ENCODE measurements at regions of chr3 and their contacts with region 1.

Region 1: GRCh38 chr3:49093853-49094767 is at the start of gene QRICH1:
- DNase-seq: peak; percentile 98
- ATAC-seq: peak; percentile 89 to 95 (median 94)
- H3K4me3 ChIP-seq: peak within 1 kb of the TSS; percentile 63 to 100 (median 94)
- H3K27ac ChIP-seq: peak within 1 kb of the TSS; percentile 86 to 99 (median 94)
- H3K4me1 ChIP-seq: peaks cover 0 to 62% (median 41%) of the 10 kb centered on the region in 12 donors
- H3K27me3 ChIP-seq: no peaks in the 10 kb centered on the region
- CTCF ChIP-seq: peak in 11 of 12 donors; percentile 14 to 74 (median 52)
- POLR2A ChIP-seq: peak in 1 of 2 donors; percentile 47
- total RNA-seq, gene QRICH1: 44.6 to 91.6 (median 55.5) TPM

Region 2: DNA sequence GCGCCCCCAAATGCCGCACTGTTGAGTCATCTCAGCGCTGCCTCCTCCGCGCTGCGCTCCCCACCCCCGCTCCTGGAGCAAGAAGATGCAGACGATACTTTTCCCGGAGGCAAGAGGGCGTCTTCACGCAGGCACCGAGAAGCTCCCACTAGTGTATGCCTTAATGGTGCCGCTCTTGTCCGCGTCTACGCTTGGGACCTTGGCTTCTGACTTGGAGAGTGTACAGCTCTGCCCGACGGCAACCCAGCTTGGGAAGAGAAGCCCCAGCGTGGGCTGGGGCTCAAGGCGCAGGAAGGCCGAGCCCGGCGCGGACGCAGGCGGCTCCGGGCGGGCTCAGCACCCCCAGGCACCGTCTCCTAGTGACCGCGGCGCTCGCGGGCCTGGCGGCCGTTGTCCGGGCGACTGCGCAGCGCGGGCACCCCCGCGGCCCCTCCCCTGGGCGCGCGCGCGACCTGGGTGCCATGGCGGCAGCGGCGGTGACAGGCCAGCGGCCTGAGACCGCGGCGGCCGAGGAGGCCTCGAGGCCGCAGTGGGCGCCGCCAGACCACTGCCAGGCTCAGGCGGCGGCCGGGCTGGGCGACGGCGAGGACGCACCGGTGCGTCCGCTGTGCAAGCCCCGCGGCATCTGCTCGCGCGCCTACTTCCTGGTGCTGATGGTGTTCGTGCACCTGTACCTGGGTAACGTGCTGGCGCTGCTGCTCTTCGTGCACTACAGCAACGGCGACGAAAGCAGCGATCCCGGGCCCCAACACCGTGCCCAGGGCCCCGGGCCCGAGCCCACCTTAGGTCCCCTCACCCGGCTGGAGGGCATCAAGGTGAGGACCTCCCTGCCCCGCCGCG is 104.1 kb before region 1 on chr3 and contains the start of gene P4HTM:
- intact Hi-C with region 1: loop called in 2 of 10 experiments (anchors 2 to 10 kb)
- DNase-seq: peak; percentile 87 to 92 (median 91)
- ATAC-seq: peak; percentile 67 to 91 (median 88)
- H3K4me3 ChIP-seq: peak within 1 kb of the TSS; percentile 63 to 95 (median 87)
- H3K27ac ChIP-seq: peak within 1 kb of the TSS; percentile 68 to 98 (median 90)
- H3K4me1 ChIP-seq: peaks cover 0 to 36% (median 22%) of the 10 kb centered on the region in 12 donors
- H3K27me3 ChIP-seq: no peaks in the 10 kb centered on the region
- CTCF ChIP-seq: peak in 9 of 12 donors; percentile 22 to 61 (median 40)
- POLR2A ChIP-seq: peak in 1 of 2 donors; percentile 51
- total RNA-seq, gene P4HTM: 22.1 to 42.7 (median 34.0) TPM

Region 3: GRCh38 chr3:49021813-49022687 is 72.1 kb before region 1 on chr3 and contains the start of gene NDUFAF3:
- intact Hi-C with region 1: loop called in 2 of 10 experiments (anchors 5 to 10 kb)
- DNase-seq: peak; percentile 93 to 97 (median 94)
- ATAC-seq: peak; percentile 64 to 87 (median 84)
- H3K4me3 ChIP-seq: peak within 1 kb of the TSS; percentile 76 to 100 (median 92)
- H3K27ac ChIP-seq: peak within 1 kb of the TSS; percentile 99 to 100 (median 100)
- H3K4me1 ChIP-seq: peaks cover 0 to 75% (median 41%) of the 10 kb centered on the region in 12 donors
- H3K27me3 ChIP-seq: no peaks in the 10 kb centered on the region
- CTCF ChIP-seq: peak; percentile 89 to 100 (median 98)
- POLR2A ChIP-seq: peak; percentile 20 to 35
- total RNA-seq, gene NDUFAF3: 140 to 308 (median 160) TPM

Region 4: GRCh38 chr3:49028673-49029562 is 65.2 kb before region 1 on chr3 and contains the start of gene IMPDH2:
- intact Hi-C with region 1: loop called in 2 of 10 experiments (anchors 5 to 10 kb)
- DNase-seq: peak; percentile 90 to 97 (median 94)
- ATAC-seq: peak; percentile 94 to 97 (median 94)
- H3K4me3 ChIP-seq: peak within 1 kb of the TSS; percentile 53 to 85 (median 68)
- H3K27ac ChIP-seq: peak within 1 kb of the TSS; percentile 30 to 98 (median 91)
- H3K4me1 ChIP-seq: peaks cover 3 to 53% (median 17%) of the 10 kb centered on the region in 12 donors
- H3K27me3 ChIP-seq: no peaks in the 10 kb centered on the region
- CTCF ChIP-seq: peak in 4 of 12 donors; percentile 28 to 50 (median 38)
- POLR2A ChIP-seq: peak; percentile 93 to 99
- total RNA-seq, gene IMPDH2: 43.9 to 87.8 (median 55.4) TPM

Region 5: GRCh38 chr3:49104483-49105291 is 10.6 kb after region 1 on chr3 and contains the start of gene QARS1:
- intact Hi-C with region 1: loop called in 1 of 10 experiments (anchors 1 kb)
- DNase-seq: peak; percentile 96 to 97 (median 97)
- ATAC-seq: peak; percentile 97 to 99 (median 98)
- H3K4me3 ChIP-seq: peak within 1 kb of the TSS; percentile 68 to 99 (median 88)
- H3K27ac ChIP-seq: peak within 1 kb of the TSS; percentile 63 to 96 (median 88)
- H3K4me1 ChIP-seq: peaks cover 13 to 25% (median 18%) of the 10 kb centered on the region in 12 donors
- H3K27me3 ChIP-seq: no peaks in the 10 kb centered on the region
- CTCF ChIP-seq: no peak
- POLR2A ChIP-seq: peak; percentile 33 to 79
- total RNA-seq, gene QARS1: 145 to 221 (median 194) TPM

Region 6: DNA sequence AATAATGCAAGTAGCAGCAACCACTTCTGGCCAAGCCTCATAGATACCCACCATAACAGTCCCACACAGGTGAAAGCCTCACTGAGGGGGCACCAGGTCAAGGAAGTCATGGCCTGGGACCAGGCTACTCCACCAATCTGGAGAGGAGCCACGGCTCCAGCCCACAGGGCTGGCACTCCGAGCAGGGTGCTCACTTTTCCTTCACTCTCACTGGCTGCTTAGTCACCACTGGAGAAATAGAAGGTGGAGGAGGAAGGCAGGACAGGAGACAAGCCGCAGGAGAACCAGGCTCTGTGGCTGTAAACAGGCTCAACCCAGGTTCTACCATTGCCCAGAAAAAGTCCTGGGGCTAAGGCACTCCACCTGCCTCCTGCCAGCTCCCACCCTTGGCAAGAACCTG is 25.3 kb after region 1 on chr3:
- intact Hi-C with region 1: no loop called
- DNase-seq: no peak
- ATAC-seq: no peak
- H3K4me3 ChIP-seq: peak overlapping the region in 11 of 12 donors; percentile 64 to 99 (median 91)
- H3K27ac ChIP-seq: peak overlapping the region; percentile 90 to 100 (median 97)
- H3K4me1 ChIP-seq: peaks cover 3 to 32% (median 19%) of the 10 kb centered on the region in 12 donors
- H3K27me3 ChIP-seq: no peaks in the 10 kb centered on the region
- CTCF ChIP-seq: no peak
- POLR2A ChIP-seq: no peak

Region 7: DNA sequence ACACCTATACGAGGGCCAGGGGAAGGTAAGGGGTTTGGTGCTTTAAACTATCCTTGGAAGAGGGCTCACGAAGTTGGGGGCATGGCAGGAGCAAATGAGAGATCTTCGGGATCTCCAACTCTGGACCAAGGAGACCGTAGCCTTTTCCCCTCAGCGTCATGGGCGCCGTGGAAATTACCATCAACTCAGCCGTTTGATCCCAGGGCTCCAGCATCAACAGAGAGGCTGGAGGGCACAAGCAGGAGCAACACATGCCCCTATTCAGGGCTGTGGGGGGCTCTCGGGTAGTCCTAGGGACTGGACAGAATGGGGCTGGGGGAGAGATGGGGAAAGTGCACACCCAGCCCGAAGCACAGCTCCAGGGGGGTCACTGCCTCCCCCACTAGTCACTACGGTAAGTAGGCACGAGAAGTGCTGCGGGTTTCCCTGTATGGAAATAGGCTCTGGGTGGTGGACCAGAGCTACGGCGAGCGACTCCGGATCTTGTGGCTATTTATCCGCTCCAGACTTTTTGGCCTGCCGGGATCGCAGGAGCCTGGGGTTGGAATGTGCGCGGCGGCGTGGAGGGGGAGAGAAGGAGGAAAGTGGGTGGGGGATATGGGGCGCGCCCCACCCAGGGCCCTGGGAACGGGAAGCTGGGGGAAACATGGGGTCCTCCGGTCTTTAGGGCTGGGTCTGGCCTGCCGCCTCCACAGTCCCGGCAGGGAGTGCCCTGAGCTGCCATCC is 39.3 kb after region 1 on chr3:
- intact Hi-C with region 1: loop called in 3 of 10 experiments (anchors 1 to 2 kb)
- DNase-seq: peak; percentile 87 to 92 (median 91)
- ATAC-seq: peak; percentile 79 to 91 (median 83)
- H3K4me3 ChIP-seq: peak overlapping the region; percentile 62 to 90 (median 80)
- H3K27ac ChIP-seq: peak overlapping the region; percentile 87 to 99 (median 94)
- H3K4me1 ChIP-seq: peaks cover 8 to 48% (median 30%) of the 10 kb centered on the region in 12 donors
- H3K27me3 ChIP-seq: no peaks in the 10 kb centered on the region
- CTCF ChIP-seq: no peak
- POLR2A ChIP-seq: peak in 1 of 2 donors; percentile 26

Region 8: DNA sequence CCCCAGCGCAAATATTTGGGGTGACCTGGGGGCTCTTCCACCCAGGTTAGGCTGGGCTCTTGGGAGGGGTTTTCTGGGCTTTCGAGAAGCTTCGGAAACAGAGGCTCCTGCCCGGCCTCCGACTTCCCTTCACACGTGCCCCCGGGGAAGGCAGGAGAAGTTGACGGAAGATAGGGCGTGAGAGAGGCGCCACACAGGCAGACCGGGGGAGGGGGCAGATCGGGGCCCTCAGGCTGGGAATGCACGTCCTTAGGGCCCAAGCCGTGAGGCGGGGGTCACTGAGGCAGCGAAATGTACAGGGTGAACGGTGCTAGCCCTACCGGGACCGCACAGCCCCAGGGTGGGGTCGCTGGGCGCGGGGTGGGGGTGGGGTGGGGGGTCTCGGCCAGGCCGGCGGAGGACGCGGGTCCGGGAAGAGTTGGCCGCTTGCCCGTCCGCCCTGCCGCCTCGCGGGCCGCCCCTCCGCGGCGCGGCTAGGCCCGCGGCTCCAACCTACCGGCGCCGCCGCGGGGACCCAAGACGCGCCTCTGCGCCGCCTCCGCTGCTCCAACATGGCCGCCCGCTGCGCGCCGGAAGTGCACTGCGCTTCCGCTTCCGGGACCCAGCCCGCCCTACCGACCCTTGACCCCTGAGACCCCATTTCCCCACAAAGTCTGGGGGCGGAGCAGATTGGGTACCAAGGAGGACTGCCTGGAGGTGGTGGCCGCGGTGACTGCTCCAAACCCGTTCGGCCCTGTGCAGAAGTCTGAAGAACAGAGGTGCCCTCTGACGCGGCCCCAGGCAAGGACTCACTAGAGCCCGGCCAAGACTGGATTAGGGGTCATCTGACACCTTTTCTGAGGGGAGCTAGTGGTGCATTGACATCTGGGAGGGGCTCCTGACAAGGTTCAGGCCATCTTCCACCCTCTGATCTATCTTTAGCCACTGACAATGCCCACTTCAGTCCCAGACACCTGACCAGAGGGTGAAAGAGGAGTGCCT is 72.0 kb after region 1 on chr3 and contains the start of gene CCDC71:
- intact Hi-C with region 1: no loop called
- DNase-seq: peak; percentile 79 to 90 (median 83)
- ATAC-seq: peak; percentile 43 to 80 (median 75)
- H3K4me3 ChIP-seq: peak within 1 kb of the TSS; percentile 78 to 99 (median 89)
- H3K27ac ChIP-seq: peak within 1 kb of the TSS; percentile 82 to 96 (median 91)
- H3K4me1 ChIP-seq: peaks cover 0 to 32% (median 24%) of the 10 kb centered on the region in 12 donors
- H3K27me3 ChIP-seq: no peaks in the 10 kb centered on the region
- CTCF ChIP-seq: no peak
- POLR2A ChIP-seq: peak in 1 of 2 donors; percentile 57
- total RNA-seq, gene CCDC71: 9.7 to 24.0 (median 14.6) TPM